Sigmoid colon (tissue), 7 donors: ENCODE measurements at regions of chr19 and their contacts with region 1.

Region 1: GRCh38 chr19:33394006-33394849 is 20.7 kb downstream of the CEBPG start:
- DNase-seq: peak; percentile 86
- H3K4me3 ChIP-seq: no peak overlapping the region
- H3K27ac ChIP-seq: peak overlapping the region in 2 of 4 donors; percentile 9 to 43
- H3K4me1 ChIP-seq: peaks cover 5 to 80% (median 76%) of the 10 kb centered on the region in 4 donors
- H3K27me3 ChIP-seq: no peaks in the 10 kb centered on the region
- CTCF ChIP-seq: no peak
- EP300 ChIP-seq: no peak
- POLR2A ChIP-seq: no peak

Region 2: DNA sequence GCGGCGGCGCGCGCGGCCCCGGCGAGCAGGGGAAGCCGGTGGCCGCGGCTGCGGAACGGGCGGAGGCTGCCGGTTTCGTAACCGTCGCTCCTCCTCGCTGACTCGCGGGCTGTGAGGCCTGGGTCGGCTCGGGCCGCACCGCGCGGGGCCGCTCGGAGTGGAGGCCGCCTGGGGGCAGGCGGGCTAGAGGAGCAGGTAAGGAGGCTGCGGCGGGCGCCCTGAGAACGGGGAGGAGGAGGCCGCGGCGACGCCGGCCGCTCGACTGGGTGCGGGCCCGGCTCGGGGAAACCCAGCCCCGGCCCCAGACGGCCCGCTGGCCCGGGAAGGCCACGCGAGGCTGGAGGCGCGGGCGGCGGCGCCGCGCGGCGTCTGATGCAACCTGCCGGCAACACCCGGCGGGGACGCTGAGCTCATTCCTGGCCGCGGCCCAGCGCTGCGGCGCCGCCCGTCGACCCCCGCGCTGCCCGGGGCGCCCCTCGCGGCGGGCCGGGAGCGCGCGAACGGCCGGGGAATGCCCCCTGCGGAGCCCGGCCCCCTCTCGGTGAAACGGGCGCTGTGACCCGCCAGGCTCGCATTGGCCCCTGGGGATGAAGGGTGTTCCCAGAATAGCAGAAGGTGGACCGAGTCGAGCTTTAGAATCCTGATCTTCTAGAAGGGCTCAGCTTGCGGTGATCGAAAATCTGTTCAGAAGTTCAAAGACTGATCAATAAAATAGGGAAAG is 20.4 kb before region 1 on chr19 and contains the start of gene CEBPG:
- intact Hi-C with region 1: loop called (anchors 2 kb)
- DNase-seq: peak; percentile 78
- H3K4me3 ChIP-seq: peak within 1 kb of the TSS; percentile 55 to 83 (median 80)
- H3K27ac ChIP-seq: peak within 1 kb of the TSS; percentile 94 to 100 (median 96)
- H3K4me1 ChIP-seq: peaks cover 0 to 39% (median 32%) of the 10 kb centered on the region in 4 donors
- H3K27me3 ChIP-seq: no peaks in the 10 kb centered on the region
- CTCF ChIP-seq: no peak
- EP300 ChIP-seq: no peak
- POLR2A ChIP-seq: peak; percentile 18 to 49
- total RNA-seq, gene CEBPG: 18.6 to 27.8 (median 23.0) TPM

Region 3: GRCh38 chr19:33426621-33427361 is 32.6 kb after region 1 on chr19:
- intact Hi-C with region 1: no loop called
- DNase-seq: no peak
- H3K4me3 ChIP-seq: no peak overlapping the region
- H3K27ac ChIP-seq: no peak overlapping the region
- H3K4me1 ChIP-seq: no peaks in the 10 kb centered on the region
- H3K27me3 ChIP-seq: no peaks in the 10 kb centered on the region
- CTCF ChIP-seq: no peak
- EP300 ChIP-seq: no peak
- POLR2A ChIP-seq: no peak